ENCODE measurements at regions of chr13 and their contacts with region 1.

Region 1: GRCh38 chr13:42660333-42660965 is 86.5 kb downstream of the TNFSF11 start:
- DNase-seq: peak; percentile 6
- H3K4me3 ChIP-seq: no peak overlapping the region
- H3K27ac ChIP-seq: no peak overlapping the region
- H3K4me1 ChIP-seq: no peaks in the 10 kb centered on the region
- H3K27me3 ChIP-seq: peaks cover 2% of the 10 kb centered on the region
- CTCF ChIP-seq: peak; percentile 32 to 49

Region 2: DNA sequence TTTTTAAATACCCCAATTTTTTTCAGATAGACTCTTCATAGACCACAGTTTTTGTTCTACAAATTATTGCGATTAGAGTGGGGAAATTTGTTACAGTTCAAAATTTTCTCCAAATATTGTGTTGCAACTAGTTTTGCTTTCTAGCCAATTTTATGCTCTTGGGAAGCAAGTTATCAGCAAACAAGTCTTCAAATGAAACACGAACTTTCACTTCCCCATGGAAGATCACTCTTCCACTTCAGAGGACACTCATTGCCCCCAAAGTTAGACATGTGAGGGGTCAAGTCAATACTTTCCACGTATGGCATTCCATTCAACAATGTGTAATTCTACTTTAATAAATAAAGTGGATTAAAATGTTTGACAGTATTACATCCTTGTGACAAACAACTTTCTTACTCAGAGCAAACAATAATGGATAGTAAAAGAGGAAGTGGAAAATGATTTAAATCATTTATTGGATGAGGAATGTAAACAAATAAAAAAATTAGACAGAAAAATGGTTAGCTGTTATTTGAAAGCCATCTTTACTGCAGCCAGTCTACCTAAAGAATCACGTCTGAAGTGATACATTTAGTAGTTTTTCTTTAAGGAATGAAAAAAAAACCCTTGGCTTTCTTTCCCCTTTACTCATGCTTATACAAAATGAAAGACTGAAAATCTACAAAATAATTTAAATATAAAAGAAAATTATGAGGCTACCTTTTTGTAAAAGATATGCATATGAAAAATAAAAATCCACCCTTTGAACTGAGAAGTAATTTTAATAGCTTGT is 127.7 kb before region 1 on chr13:
- CTCF ChIA-PET with region 1: no interaction called
- dilution Hi-C with region 1: no loop called
- in situ Hi-C with region 1: no loop called
- intact Hi-C with region 1: no loop called
- DNase-seq: no peak
- H3K4me3 ChIP-seq: no peak overlapping the region
- H3K27ac ChIP-seq: no peak overlapping the region
- H3K4me1 ChIP-seq: no peaks in the 10 kb centered on the region
- H3K27me3 ChIP-seq: no peaks in the 10 kb centered on the region
- CTCF ChIP-seq: no peak

Region 3: GRCh38 chr13:42794577-42795275 is 134.3 kb after region 1 on chr13:
- CTCF ChIA-PET with region 1: no interaction called
- dilution Hi-C with region 1: no loop called
- in situ Hi-C with region 1: no loop called
- intact Hi-C with region 1: no loop called
- DNase-seq: no peak
- H3K4me3 ChIP-seq: no peak overlapping the region
- H3K27ac ChIP-seq: no peak overlapping the region
- H3K4me1 ChIP-seq: no peaks in the 10 kb centered on the region
- H3K27me3 ChIP-seq: peaks cover 2% of the 10 kb centered on the region
- CTCF ChIP-seq: no peak

Region 4: GRCh38 chr13:42883771-42884467 is 223.5 kb after region 1 on chr13:
- CTCF ChIA-PET with region 1: no interaction called
- dilution Hi-C with region 1: no loop called
- in situ Hi-C with region 1: no loop called
- intact Hi-C with region 1: loop called (anchors 10 kb)
- DNase-seq: peak; percentile 25
- H3K4me3 ChIP-seq: no peak overlapping the region
- H3K27ac ChIP-seq: no peak overlapping the region
- H3K4me1 ChIP-seq: peaks cover 12% of the 10 kb centered on the region
- H3K27me3 ChIP-seq: no peaks in the 10 kb centered on the region
- CTCF ChIP-seq: peak; percentile 29 to 36

Measured in mammary epithelial cell (primary cell).